Mammary epithelial cell (primary cell): ENCODE measurements at regions of chr14 and their contacts with region 1.

Region 1: GRCh38 chr14:104509673-104510072 is 69.9 kb upstream of the C14orf180 start:
- DNase-seq: no peak
- H3K4me3 ChIP-seq: no peak overlapping the region
- H3K27ac ChIP-seq: no peak overlapping the region
- H3K4me1 ChIP-seq: no peaks in the 10 kb centered on the region
- H3K27me3 ChIP-seq: peaks cover 10% of the 10 kb centered on the region
- CTCF ChIP-seq: no peak

Region 2: DNA sequence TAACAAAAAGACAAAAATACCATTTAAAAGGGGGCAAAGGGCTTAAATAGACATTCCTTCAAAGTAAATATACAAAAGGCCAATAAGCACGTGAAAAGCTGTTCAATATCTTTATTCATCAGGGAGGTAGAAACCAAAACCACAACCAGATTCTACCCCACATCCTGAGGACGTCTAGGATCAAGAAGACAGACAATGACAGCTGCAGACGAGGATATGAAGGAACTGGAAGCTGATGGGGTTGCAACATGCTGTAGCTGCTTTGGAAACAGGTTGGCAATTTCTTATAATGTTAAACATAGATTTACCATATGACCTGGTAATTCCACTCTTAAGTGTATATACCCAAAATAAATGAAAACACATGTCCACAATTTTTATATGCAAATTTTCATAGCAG is 15.2 kb before region 1 on chr14:
- CTCF ChIA-PET with region 1: no interaction called
- dilution Hi-C with region 1: no loop called
- in situ Hi-C with region 1: no loop called
- intact Hi-C with region 1: no loop called
- DNase-seq: no peak
- H3K4me3 ChIP-seq: no peak overlapping the region
- H3K27ac ChIP-seq: no peak overlapping the region
- H3K4me1 ChIP-seq: no peaks in the 10 kb centered on the region
- H3K27me3 ChIP-seq: no peaks in the 10 kb centered on the region
- CTCF ChIP-seq: no peak

Region 3: GRCh38 chr14:104545151-104545941 is 35.7 kb after region 1 on chr14:
- CTCF ChIA-PET with region 1: no interaction called
- dilution Hi-C with region 1: no loop called
- in situ Hi-C with region 1: no loop called
- intact Hi-C with region 1: no loop called
- DNase-seq: no peak
- H3K4me3 ChIP-seq: no peak overlapping the region
- H3K27ac ChIP-seq: no peak overlapping the region
- H3K4me1 ChIP-seq: no peaks in the 10 kb centered on the region
- H3K27me3 ChIP-seq: peaks cover 5% of the 10 kb centered on the region
- CTCF ChIP-seq: no peak

Region 4: GRCh38 chr14:104573930-104574329 is 64.3 kb after region 1 on chr14:
- CTCF ChIA-PET with region 1: no interaction called
- dilution Hi-C with region 1: loop called (anchors 5 kb)
- in situ Hi-C with region 1: no loop called
- intact Hi-C with region 1: no loop called
- DNase-seq: no peak
- H3K4me3 ChIP-seq: no peak overlapping the region
- H3K27ac ChIP-seq: no peak overlapping the region
- H3K4me1 ChIP-seq: no peaks in the 10 kb centered on the region
- H3K27me3 ChIP-seq: peaks cover 6% of the 10 kb centered on the region
- CTCF ChIP-seq: no peak